OCI-LY7 (cell line): ENCODE measurements at regions of chrX and their contacts with region 1.

Region 1: GRCh38 chrX:5976332-5976731 is 252.3 kb downstream of the NLGN4X start:
- DNase-seq: no peak
- H3K4me3 ChIP-seq: no peak overlapping the region
- H3K27ac ChIP-seq: no peak overlapping the region
- H3K4me1 ChIP-seq: no peaks in the 10 kb centered on the region
- CTCF ChIP-seq: no peak

Region 2: DNA sequence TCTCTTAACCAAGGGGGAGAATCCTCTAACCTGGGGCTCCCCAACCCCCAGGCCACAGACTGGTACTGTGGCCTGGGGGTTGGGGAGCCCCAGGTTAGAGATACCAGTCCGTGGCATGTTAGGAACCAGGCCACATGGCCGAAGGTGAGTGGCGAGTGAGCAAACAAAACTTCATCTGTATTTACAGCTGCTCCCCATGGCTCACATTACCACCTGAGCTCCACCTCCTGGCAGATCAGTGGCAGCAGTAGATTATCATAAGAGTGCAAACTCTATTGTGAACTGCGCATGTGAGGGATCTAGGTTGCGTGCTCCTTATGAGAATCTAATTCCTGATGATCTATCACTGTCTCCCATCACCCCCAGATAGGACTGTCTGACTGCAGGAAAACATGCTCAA is 1305.7 kb before region 1 on chrX:
- CTCF ChIA-PET with region 1: no interaction called
- POLR2A ChIA-PET with region 1: interaction called, 10 read pairs
- intact Hi-C with region 1: no loop called
- DNase-seq: no peak
- H3K4me3 ChIP-seq: no peak overlapping the region
- H3K27ac ChIP-seq: no peak overlapping the region
- H3K4me1 ChIP-seq: no peaks in the 10 kb centered on the region
- CTCF ChIP-seq: no peak

Region 3: DNA sequence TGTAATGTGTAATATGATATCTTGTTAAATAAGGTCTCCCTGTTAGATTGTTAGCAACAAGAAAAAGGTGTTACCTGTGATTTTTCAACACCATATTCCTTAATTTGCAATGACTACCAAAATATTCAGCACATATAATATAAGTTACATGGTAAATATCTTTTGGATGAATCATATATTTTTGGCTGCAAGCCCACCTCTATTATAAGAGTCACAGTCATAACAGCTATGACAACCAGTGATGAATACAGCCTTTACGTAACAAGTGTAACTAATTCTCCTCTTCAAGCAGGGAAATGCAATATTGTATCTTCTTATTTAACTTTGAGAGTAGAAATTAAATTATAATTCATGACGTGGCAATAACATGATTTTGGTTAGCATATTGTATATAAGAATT is 65.3 kb after region 1 on chrX:
- CTCF ChIA-PET with region 1: no interaction called
- POLR2A ChIA-PET with region 1: no interaction called
- intact Hi-C with region 1: no loop called
- DNase-seq: no peak
- H3K4me3 ChIP-seq: no peak overlapping the region
- H3K27ac ChIP-seq: no peak overlapping the region
- H3K4me1 ChIP-seq: no peaks in the 10 kb centered on the region
- CTCF ChIP-seq: no peak

Region 4: DNA sequence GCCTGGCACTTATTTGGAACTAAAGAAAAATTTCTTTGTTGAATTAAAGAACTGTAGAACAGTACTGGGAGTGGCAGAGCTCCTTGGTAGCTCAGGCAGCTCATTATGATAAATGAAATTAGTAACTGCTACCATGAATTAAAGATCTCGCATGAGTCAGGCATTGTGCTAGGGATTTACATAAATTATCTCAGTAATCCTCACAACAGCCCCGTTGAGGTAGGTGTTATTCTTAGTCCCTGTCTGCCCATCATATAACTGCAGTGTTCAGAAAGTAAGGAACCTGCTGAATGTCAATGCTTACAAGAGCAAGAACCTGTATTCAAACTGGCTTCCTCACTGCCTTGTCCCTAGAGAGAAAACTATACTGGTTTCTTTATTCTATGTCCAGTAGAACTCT is 144.0 kb after region 1 on chrX:
- CTCF ChIA-PET with region 1: no interaction called
- POLR2A ChIA-PET with region 1: no interaction called
- intact Hi-C with region 1: no loop called
- DNase-seq: no peak
- H3K4me3 ChIP-seq: no peak overlapping the region
- H3K27ac ChIP-seq: no peak overlapping the region
- H3K4me1 ChIP-seq: no peaks in the 10 kb centered on the region
- CTCF ChIP-seq: no peak